Ascending aorta (tissue), 2 donors: ENCODE measurements at regions of chr2 and their contacts with region 1.

Region 1: DNA sequence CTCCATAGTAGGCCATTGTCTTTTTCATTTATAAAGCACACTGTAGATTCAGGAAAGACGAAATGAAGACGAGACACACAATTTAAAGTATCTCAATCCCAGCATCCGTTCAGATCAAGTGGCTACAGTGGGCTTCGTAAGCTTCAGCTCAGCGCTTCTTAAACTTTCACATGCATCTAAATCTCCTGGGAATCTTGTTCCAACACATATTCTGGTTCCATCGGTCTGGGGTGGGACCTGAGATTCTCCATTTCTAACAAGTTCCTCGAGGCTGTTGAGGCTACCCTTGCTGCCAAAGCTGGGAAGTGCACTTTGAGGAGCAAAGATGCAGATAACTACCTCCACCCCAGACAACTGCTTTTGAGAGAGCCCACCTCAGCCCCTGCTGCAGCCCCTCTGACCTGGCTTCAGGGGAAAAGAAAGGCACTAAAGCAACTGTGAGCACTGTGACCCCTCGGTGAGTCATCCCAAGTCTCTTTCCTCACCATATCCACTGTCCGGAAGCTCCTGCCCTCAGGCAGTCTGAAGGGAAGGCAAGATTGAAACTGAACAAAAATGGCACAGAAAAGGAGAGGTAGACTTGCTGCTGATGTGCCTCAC is 201.1 kb upstream of the FBXO11 start:
- DNase-seq: no peak
- H3K4me3 ChIP-seq: no peak overlapping the region
- H3K27ac ChIP-seq: peak overlapping the region; percentile 51 to 65
- H3K4me1 ChIP-seq: peaks cover 0 to 8% of the 10 kb centered on the region in 2 donors
- H3K27me3 ChIP-seq: no peaks in the 10 kb centered on the region
- CTCF ChIP-seq: no peak

Region 2: GRCh38 chr2:46621499-46621898 is 1485.9 kb before region 1 on chr2:
- intact Hi-C with region 1: no loop called
- DNase-seq: no peak
- H3K4me3 ChIP-seq: no peak overlapping the region
- H3K27ac ChIP-seq: no peak overlapping the region
- H3K4me1 ChIP-seq: peaks cover 0 to 12% of the 10 kb centered on the region in 2 donors
- H3K27me3 ChIP-seq: no peaks in the 10 kb centered on the region
- CTCF ChIP-seq: no peak

Region 3: GRCh38 chr2:47437287-47437686 is 670.1 kb before region 1 on chr2:
- intact Hi-C with region 1: loop called (anchors 5 kb)
- DNase-seq: no peak
- H3K4me3 ChIP-seq: no peak overlapping the region
- H3K27ac ChIP-seq: no peak overlapping the region
- H3K4me1 ChIP-seq: peaks cover 0 to 7% of the 10 kb centered on the region in 2 donors
- H3K27me3 ChIP-seq: no peaks in the 10 kb centered on the region
- CTCF ChIP-seq: peak in 2 of 3 experiments; percentile 55 to 64

Region 4: GRCh38 chr2:47767880-47768609 is 339.4 kb before region 1 on chr2:
- intact Hi-C with region 1: loop called (anchors 5 kb)
- DNase-seq: peak in 1 of 2 donors; percentile 79
- H3K4me3 ChIP-seq: peak overlapping the region in 1 of 2 donors; percentile 26
- H3K27ac ChIP-seq: no peak overlapping the region
- H3K4me1 ChIP-seq: peaks cover 0 to 5% of the 10 kb centered on the region in 2 donors
- H3K27me3 ChIP-seq: no peaks in the 10 kb centered on the region
- CTCF ChIP-seq: peak; percentile 92 to 99 (median 99)

Region 5: DNA sequence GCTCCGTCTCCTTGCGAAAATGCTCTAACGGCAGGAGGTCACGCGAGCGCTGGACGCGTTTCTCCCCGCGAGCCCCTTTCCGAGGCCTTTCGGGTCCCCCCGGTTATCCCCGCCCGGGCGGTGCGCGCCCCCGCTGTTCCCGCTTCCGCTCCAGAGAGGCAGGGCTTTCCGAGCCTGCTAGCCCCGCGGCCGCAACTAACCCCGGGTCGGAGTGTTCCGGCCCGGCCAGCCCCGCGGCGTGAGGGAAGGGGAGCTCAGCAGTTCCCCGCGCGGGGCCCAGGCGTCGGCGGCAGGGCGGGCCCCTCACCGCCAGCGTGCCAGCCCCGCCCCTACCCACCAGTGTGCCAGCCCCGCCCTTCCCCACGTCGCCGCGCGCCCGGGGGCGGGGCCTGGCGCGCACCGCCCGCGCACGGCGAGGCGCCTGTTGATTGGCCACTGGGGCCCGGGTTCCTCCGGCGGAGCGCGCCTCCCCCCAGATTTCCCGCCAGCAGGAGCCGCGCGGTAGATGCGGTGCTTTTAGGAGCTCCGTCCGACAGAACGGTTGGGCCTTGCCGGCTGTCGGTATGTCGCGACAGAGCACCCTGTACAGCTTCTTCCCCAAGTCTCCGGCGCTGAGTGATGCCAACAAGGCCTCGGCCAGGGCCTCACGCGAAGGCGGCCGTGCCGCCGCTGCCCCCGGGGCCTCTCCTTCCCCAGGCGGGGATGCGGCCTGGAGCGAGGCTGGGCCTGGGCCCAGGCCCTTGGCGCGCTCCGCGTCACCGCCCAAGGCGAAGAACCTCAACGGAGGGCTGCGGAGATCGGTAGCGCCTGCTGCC is 324.5 kb before region 1 on chr2 and contains the start of gene MSH6:
- intact Hi-C with region 1: loop called (anchors 2 kb)
- DNase-seq: peak; percentile 49 to 93
- H3K4me3 ChIP-seq: peak within 1 kb of the TSS; percentile 98 to 100
- H3K27ac ChIP-seq: peak within 1 kb of the TSS; percentile 89 to 96
- H3K4me1 ChIP-seq: peaks cover 0 to 16% of the 10 kb centered on the region in 2 donors
- H3K27me3 ChIP-seq: no peaks in the 10 kb centered on the region
- CTCF ChIP-seq: no peak
- total RNA-seq, gene MSH6: 11.8 TPM

Region 6: GRCh38 chr2:47862949-47863348 is 244.5 kb before region 1 on chr2:
- intact Hi-C with region 1: loop called (anchors 1 kb)
- DNase-seq: no peak
- H3K4me3 ChIP-seq: no peak overlapping the region
- H3K27ac ChIP-seq: no peak overlapping the region
- H3K4me1 ChIP-seq: peaks cover 6 to 15% of the 10 kb centered on the region in 2 donors
- H3K27me3 ChIP-seq: no peaks in the 10 kb centered on the region
- CTCF ChIP-seq: no peak

Region 7: GRCh38 chr2:47906157-47907038 is 201.0 kb before region 1 on chr2 and contains the start of gene FBXO11:
- intact Hi-C with region 1: loop called (anchors 1 kb)
- DNase-seq: peak; percentile 96 to 99
- H3K4me3 ChIP-seq: peak within 1 kb of the TSS; percentile 99 to 100
- H3K27ac ChIP-seq: peak within 1 kb of the TSS; percentile 99 to 100
- H3K4me1 ChIP-seq: peaks cover 0 to 12% of the 10 kb centered on the region in 2 donors
- H3K27me3 ChIP-seq: no peaks in the 10 kb centered on the region
- CTCF ChIP-seq: peak; percentile 53 to 67 (median 65)
- total RNA-seq, gene FBXO11: 15.1 TPM

Region 8: DNA sequence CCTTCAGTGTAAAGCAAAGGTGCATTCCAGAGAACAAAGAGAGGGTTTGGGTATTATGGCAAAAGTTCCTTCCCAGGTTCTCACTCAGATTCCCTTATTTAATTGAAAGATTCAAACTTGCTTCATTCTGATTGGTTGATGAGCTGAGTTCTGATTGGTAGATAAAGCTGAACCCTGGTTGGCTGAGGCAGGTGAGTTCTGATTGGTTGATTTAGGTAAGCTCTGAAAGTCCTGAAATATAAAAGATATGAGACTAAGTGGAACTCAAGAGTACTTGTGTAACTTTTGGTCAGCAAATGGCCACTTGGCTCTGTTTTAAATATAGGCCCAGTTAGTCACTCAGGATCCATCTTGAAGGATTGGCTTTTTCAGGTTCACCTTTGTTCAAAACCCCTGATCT is 101.3 kb before region 1 on chr2:
- intact Hi-C with region 1: no loop called
- DNase-seq: no peak
- H3K4me3 ChIP-seq: no peak overlapping the region
- H3K27ac ChIP-seq: no peak overlapping the region
- H3K4me1 ChIP-seq: no peaks in the 10 kb centered on the region
- H3K27me3 ChIP-seq: no peaks in the 10 kb centered on the region
- CTCF ChIP-seq: no peak